Activated CD4-positive, alpha-beta memory T cell treated with anti-CD3 and anti-CD28 coated beads for 36 hours (primary cell): ENCODE measurements at regions of chr14 and their contacts with region 1.

Region 1: GRCh38 chr14:91872517-91873470 is 5.5 kb upstream of the TC2N start:
- DNase-seq: peak; percentile 43
- H3K4me3 Mint-ChIP-seq: peak overlapping the region; percentile 69
- H3K27ac Mint-ChIP-seq: peak overlapping the region; percentile 83
- H3K4me1 Mint-ChIP-seq: peaks cover 80% of the 10 kb centered on the region
- H3K27me3 Mint-ChIP-seq: no peaks in the 10 kb centered on the region

Region 2: DNA sequence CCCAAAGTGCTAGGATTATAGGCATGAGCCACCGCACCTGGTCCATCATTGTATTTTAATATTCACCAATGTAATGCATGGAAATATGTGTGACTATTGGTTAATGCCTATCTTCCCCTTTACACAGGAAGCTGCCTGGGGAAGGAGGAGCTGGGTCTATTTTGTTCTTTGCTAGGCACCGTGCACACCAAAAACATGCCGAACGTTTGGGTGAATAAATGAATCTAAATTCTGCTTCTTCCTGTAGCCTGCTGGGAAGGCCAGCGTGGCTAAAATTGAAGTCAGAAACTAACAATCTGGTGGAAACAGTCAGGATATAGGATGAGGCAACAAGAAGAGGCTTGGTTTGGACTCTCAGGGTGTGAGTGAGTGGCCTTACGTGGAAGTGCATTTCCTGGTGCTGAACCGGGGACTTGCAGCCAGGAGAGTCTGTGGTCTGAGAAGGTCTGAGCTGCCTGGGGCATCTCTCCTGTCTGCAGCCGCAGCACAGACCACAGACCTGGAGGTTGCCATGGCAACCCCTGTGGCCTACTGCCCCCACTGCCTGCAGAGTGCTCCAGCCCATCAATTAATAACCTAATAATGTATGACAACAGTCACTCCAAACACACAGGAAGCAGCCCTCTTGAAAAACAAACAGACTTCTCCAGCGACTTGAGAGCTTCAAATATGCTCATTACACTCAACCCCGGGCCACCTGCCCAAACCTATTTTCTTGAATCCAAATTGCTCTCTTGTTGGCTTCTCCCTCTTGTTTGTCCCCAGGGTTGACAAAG is 622.8 kb before region 1 on chr14:
- CTCF ChIA-PET with region 1: no interaction called
- POLR2A ChIA-PET with region 1: no interaction called
- intact Hi-C with region 1: loop called (anchors 5 kb)
- DNase-seq: peak; percentile 67
- H3K4me3 Mint-ChIP-seq: peak overlapping the region; percentile 36
- H3K27ac Mint-ChIP-seq: peak overlapping the region; percentile 92
- H3K4me1 Mint-ChIP-seq: peaks cover 85% of the 10 kb centered on the region
- H3K27me3 Mint-ChIP-seq: no peaks in the 10 kb centered on the region

Region 3: GRCh38 chr14:91858215-91858905 is 14.4 kb before region 1 on chr14:
- CTCF ChIA-PET with region 1: interaction called, 3 read pairs
- POLR2A ChIA-PET with region 1: interaction called, 8 read pairs
- intact Hi-C with region 1: loop called (anchors 2 kb)
- DNase-seq: peak; percentile 61
- H3K4me3 Mint-ChIP-seq: peak overlapping the region; percentile 49
- H3K27ac Mint-ChIP-seq: peak overlapping the region; percentile 78
- H3K4me1 Mint-ChIP-seq: peaks cover 88% of the 10 kb centered on the region
- H3K27me3 Mint-ChIP-seq: no peaks in the 10 kb centered on the region

Region 4: GRCh38 chr14:91911474-91912032 is 38.8 kb after region 1 on chr14:
- CTCF ChIA-PET with region 1: interaction called, 7 read pairs
- POLR2A ChIA-PET with region 1: no interaction called
- intact Hi-C with region 1: loop called (anchors 5 kb)
- DNase-seq: peak; percentile 55
- H3K4me3 Mint-ChIP-seq: no peak overlapping the region
- H3K27ac Mint-ChIP-seq: no peak overlapping the region
- H3K4me1 Mint-ChIP-seq: peaks cover 5% of the 10 kb centered on the region
- H3K27me3 Mint-ChIP-seq: no peaks in the 10 kb centered on the region

Region 5: GRCh38 chr14:91980127-91980741 is 107.4 kb after region 1 on chr14:
- CTCF ChIA-PET with region 1: no interaction called
- POLR2A ChIA-PET with region 1: no interaction called
- intact Hi-C with region 1: loop called (anchors 5 kb)
- DNase-seq: no peak
- H3K4me3 Mint-ChIP-seq: no peak overlapping the region
- H3K27ac Mint-ChIP-seq: no peak overlapping the region
- H3K4me1 Mint-ChIP-seq: peaks cover 42% of the 10 kb centered on the region
- H3K27me3 Mint-ChIP-seq: no peaks in the 10 kb centered on the region